Activated T-helper 1 cell treated with anti-CD3 and anti-CD28 coated beads, Interleukin-12 subunit alpha, Interleukin-12 subunit beta, Interleukin-2, Interleukin-4 antibody, amounts not matched to agents 30 ng/mL and 10 ng/mL and 1 ng/mL, durations not matched to agents 14 hours and 24 hours and 36 hours (primary cell): ENCODE measurements at regions of chr1 and their contacts with region 1.

Region 1: GRCh38 chr1:233598891-233599541 is 14.9 kb upstream of the KCNK1 start:
- DNase-seq: no peak
- H3K4me3 Mint-ChIP-seq: no peak overlapping the region
- H3K27ac Mint-ChIP-seq: peak overlapping the region; percentile 49
- H3K4me1 Mint-ChIP-seq: peaks cover 18% of the 10 kb centered on the region
- H3K27me3 Mint-ChIP-seq: peaks cover 7% of the 10 kb centered on the region

Region 2: DNA sequence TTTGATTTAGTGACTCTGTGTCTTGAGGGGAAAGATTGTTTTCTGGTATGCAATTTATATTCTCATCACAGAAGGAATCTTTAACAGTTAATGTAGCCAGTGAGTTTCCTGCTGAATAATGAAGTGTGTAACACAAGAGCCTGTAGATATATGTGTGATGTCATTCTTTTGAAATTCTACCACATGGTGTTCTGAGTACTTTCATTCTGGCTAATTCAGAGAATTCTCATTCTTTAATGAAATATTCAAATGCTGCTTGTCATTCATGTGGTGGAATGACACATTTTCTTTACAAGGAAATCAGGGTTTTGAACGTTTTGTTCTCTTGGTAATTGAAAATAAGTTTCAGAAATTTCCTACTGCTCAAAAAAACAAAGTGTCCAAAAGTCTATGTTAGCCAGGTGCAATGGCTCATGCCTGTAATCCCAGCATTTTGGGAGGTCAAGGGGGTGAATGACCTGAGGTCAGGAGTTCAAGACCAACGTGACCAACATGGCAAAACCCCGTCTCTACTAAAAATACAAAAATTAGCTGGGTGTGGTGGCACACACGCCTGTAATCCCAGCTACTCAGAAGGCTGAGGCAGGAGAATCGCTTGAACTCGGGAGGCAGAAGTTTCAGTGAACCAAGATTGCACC is 191.9 kb before region 1 on chr1:
- intact Hi-C with region 1: loop called (anchors 1 kb)
- DNase-seq: no peak
- H3K4me3 Mint-ChIP-seq: no peak overlapping the region
- H3K27ac Mint-ChIP-seq: peak overlapping the region; percentile 64
- H3K4me1 Mint-ChIP-seq: peaks cover 22% of the 10 kb centered on the region
- H3K27me3 Mint-ChIP-seq: peaks cover 9% of the 10 kb centered on the region

Region 3: DNA sequence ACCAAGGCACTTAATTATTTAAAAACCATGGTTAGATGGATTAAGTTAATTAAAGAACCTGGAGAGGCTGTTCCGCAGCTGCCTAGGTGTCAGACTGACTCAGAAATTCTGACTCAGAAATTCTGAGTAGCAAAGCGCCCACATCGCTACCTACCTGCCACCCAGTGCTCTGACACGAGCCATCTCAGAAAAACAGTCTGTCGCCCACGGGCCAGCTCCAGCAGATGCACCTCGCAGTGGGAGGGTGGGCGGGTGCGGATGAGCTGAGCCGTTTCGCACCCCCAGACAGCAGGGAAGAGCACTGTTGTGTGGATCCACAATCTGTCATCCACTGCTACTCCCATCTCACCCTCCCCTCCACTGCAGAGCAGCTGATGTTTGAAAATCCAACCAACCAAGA is 28.4 kb after region 1 on chr1:
- intact Hi-C with region 1: loop called (anchors 1 kb)
- DNase-seq: no peak
- H3K4me3 Mint-ChIP-seq: no peak overlapping the region
- H3K27ac Mint-ChIP-seq: peak overlapping the region; percentile 15
- H3K4me1 Mint-ChIP-seq: no peaks in the 10 kb centered on the region
- H3K27me3 Mint-ChIP-seq: peaks cover 3% of the 10 kb centered on the region

Region 4: GRCh38 chr1:233790662-233791375 is 191.8 kb after region 1 on chr1:
- intact Hi-C with region 1: loop called (anchors 5 kb)
- DNase-seq: peak; percentile 8
- H3K4me3 Mint-ChIP-seq: no peak overlapping the region
- H3K27ac Mint-ChIP-seq: no peak overlapping the region
- H3K4me1 Mint-ChIP-seq: no peaks in the 10 kb centered on the region
- H3K27me3 Mint-ChIP-seq: peaks cover 4% of the 10 kb centered on the region

Region 5: DNA sequence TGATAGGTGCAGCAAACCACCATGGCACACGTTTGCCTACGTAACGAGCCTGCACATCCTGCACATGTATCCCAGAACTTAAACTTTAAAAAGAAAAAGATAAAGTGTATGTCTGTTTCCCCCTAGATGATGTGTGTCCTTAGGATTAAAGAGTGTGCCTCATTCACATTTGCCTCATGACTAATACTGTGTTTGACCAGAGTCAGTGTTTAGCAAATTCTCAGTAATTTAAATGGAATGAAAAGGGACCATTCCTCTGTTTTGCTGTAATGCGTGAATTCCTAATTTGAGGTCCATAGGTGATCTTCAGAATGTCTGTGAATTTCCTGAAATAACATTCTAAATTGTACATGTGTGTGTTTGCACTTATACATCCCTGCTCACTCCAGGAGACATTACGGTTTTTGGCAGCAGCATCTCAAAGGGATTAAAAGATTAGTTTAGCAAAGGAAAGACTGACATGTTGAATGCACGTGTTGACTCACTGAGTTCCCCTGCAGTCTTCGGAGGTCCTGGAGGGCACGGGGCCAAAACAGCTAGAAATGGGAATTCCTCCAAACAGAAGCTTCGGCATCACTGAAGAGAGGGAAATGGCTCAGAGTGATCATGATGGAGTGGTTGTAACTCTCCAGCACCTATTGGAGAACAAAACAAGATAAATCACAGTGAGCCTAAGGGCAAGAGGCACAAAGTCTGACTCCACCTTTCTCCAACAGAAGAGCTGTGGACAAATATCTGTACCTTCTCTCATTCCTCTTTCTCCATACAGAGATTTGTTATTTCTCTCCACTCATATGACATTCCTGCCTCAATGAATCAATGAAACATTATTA is 286.4 kb after region 1 on chr1:
- intact Hi-C with region 1: no loop called
- DNase-seq: no peak
- H3K4me3 Mint-ChIP-seq: no peak overlapping the region
- H3K27ac Mint-ChIP-seq: no peak overlapping the region
- H3K4me1 Mint-ChIP-seq: no peaks in the 10 kb centered on the region
- H3K27me3 Mint-ChIP-seq: no peaks in the 10 kb centered on the region